ENCODE measurements at regions of chr16 and their contacts with region 1.

Region 1: GRCh38 chr16:67447508-67448076 is 16.7 kb downstream of the HSD11B2 start:
- DNase-seq: peak; percentile 83
- H3K4me3 Mint-ChIP-seq: no peak overlapping the region
- H3K27ac Mint-ChIP-seq: no peak overlapping the region
- H3K4me1 Mint-ChIP-seq: no peaks in the 10 kb centered on the region
- H3K27me3 Mint-ChIP-seq: no peaks in the 10 kb centered on the region

Region 2: GRCh38 chr16:67115639-67116038 is 332.0 kb before region 1 on chr16:
- CTCF ChIA-PET with region 1: no interaction called
- DNase-seq: no peak
- H3K4me3 Mint-ChIP-seq: no peak overlapping the region
- H3K27ac Mint-ChIP-seq: no peak overlapping the region
- H3K4me1 Mint-ChIP-seq: peaks cover 26% of the 10 kb centered on the region
- H3K27me3 Mint-ChIP-seq: no peaks in the 10 kb centered on the region

Region 3: DNA sequence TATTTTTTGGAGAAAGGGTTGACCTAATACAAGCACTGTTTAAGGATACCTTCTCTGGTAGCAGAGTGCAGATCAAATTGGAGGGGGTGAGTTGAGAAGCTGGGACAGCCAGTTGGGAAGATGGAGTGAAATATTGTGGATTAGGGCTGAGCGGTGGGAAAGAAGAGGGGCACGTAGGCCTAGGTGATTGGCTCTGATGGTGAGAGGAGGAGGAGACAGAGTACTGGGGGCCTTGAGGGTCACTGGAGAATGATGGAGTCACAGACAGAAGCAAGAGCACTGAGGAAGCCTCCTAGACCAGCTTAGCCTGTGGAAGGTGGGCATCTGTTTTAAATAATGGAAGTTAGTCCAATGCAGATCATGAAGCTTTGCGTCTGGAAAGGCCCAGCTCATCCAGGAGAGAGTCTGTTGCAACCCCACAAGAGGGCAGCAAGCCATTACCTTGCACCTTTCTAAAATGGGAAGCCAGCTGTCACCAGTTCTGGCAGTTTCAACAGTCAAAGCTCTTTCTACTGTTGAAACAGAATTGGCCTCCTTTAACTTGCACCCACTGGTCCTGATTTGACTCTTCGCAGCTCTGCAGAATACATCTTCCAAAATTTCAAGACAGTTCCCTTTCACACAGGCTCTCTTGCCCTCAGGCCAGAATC is 187.0 kb before region 1 on chr16:
- CTCF ChIA-PET with region 1: interaction called, 16 read pairs
- DNase-seq: peak; percentile 59
- H3K4me3 Mint-ChIP-seq: no peak overlapping the region
- H3K27ac Mint-ChIP-seq: no peak overlapping the region
- H3K4me1 Mint-ChIP-seq: no peaks in the 10 kb centered on the region
- H3K27me3 Mint-ChIP-seq: peaks cover 46% of the 10 kb centered on the region

Region 4: DNA sequence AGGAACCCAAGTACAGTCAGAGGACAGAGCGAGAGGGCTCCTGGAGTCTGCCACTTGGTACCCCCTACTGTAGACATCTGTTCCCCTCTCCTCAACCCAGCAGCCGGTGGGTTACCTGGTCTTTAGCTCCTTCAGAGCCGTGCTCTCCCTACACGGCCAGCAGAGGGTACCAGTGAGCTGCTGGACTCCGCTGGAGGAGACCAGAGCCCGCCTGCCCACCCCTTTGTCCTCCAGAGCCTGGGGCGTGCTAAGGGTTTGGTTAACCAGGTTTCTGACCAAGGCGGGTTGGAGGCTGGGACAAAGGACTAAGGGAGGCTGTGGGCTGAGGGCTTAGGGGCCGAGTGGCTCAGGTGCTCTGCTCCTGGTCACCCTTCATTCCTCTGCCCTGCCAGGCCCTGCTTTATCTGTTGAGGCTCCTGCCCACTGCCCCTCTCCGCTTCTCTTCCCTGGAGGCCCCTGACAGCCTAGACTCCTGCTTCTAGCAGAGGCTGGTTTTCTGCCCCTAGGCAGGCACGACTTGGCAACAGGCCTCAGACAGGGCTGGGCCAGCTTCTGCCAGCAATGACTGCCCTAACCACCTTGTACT is 19.4 kb before region 1 on chr16:
- CTCF ChIA-PET with region 1: interaction called, 101 read pairs
- DNase-seq: peak; percentile 75
- H3K4me3 Mint-ChIP-seq: no peak overlapping the region
- H3K27ac Mint-ChIP-seq: no peak overlapping the region
- H3K4me1 Mint-ChIP-seq: peaks cover 10% of the 10 kb centered on the region
- H3K27me3 Mint-ChIP-seq: peaks cover 94% of the 10 kb centered on the region

Region 5: DNA sequence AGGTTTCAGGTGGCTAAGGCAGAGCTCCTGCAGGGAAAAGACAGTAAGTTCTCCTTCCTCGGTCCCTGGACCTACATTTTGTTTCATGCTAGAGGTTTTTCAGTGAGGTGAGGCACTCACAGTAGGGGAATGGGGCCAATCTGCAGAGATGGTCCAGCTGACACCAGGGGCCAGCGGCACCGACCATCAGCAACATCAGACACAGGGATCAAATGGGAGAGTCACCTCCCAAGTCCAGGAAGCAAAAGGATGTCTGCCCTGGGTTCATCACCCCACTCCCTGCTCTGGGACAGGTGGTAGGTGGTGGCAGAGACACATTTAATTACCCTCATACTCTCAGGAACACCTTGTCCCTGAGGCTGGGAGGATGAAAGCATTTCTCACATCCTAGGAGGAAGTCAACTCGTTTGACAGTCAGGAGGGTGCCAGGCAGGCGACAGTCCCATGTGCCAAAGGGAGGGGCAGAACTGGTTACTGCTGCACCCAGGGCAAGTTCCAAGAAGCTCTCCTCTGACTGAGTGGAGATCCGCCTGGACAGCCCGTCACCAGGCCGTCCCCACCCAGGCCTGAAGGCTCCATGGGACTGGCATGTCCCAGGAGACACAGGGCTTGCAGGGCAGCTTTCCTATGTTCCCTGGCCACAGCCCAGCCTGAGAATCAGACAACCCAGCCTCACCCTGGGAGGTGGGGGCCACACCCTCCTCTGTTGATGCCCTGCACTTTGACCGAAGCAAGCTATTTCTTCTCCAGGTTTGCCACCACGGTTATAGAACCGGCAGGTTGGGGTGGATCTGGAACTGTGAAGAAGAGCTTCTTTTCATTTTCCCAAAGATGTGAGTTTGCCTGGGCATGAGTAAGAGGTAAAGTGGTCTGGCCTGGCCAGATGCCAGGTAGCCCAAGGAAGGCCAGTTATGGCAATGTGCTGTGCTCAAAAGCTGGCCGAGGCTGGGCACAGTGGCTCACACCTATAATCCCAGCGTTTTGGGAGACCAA is 14.3 kb after region 1 on chr16:
- CTCF ChIA-PET with region 1: interaction called, 12 read pairs
- DNase-seq: no peak
- H3K4me3 Mint-ChIP-seq: no peak overlapping the region
- H3K27ac Mint-ChIP-seq: peak overlapping the region; percentile 74
- H3K4me1 Mint-ChIP-seq: peaks cover 7% of the 10 kb centered on the region
- H3K27me3 Mint-ChIP-seq: no peaks in the 10 kb centered on the region

Region 6: DNA sequence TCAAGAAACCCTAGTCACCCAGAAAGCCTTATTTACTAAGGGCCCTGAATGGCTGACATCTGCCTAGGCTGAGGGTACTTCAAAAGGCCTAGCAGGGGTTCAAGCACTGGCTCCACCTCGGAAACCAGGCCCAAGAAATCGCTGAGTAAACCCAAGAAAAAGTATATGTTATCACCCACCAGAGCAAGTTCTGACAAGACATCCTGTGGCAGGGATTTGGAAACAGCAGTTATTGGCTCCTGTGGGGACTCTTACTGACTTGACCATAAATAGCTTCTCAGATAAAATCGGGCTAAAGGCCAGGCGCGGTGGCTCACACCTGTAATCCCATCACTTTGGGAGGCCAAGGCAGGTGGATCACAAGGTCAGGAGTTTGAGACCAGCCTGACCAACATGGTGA is 21.1 kb after region 1 on chr16:
- CTCF ChIA-PET with region 1: interaction called, 11 read pairs
- DNase-seq: no peak
- H3K4me3 Mint-ChIP-seq: no peak overlapping the region
- H3K27ac Mint-ChIP-seq: no peak overlapping the region
- H3K4me1 Mint-ChIP-seq: peaks cover 5% of the 10 kb centered on the region
- H3K27me3 Mint-ChIP-seq: no peaks in the 10 kb centered on the region

Measured in activated naive CD4-positive, alpha-beta T cell treated with anti-CD3 and anti-CD28 coated beads, Interleukin-2, amount 10 ng/mL, durations not matched to agents 7 days and 5 days (primary cell).